Activated T-helper 2 cell treated with anti-CD3 and anti-CD28 coated beads, Interferon-gamma antibody, Interleukin-2, Interleukin-4, amounts not matched to agents 10 μg/mL and 5 μg/mL and 100 μg/mL, durations not matched to agents 14 hours and 24 hours and 36 hours (primary cell): ENCODE measurements at regions of chr19 and their contacts with region 1.

Region 1: GRCh38 chr19:57559404-57560025 is at the start of gene ZNF550:
- DNase-seq: peak; percentile 82
- H3K4me3 Mint-ChIP-seq: peak within 1 kb of the TSS; percentile 88
- H3K27ac Mint-ChIP-seq: peak within 1 kb of the TSS; percentile 76
- H3K4me1 Mint-ChIP-seq: peaks cover 18% of the 10 kb centered on the region
- H3K27me3 Mint-ChIP-seq: no peaks in the 10 kb centered on the region
- total RNA-seq, gene ZNF550: 6.9 and 7.7 TPM in 2 replicates

Region 2: DNA sequence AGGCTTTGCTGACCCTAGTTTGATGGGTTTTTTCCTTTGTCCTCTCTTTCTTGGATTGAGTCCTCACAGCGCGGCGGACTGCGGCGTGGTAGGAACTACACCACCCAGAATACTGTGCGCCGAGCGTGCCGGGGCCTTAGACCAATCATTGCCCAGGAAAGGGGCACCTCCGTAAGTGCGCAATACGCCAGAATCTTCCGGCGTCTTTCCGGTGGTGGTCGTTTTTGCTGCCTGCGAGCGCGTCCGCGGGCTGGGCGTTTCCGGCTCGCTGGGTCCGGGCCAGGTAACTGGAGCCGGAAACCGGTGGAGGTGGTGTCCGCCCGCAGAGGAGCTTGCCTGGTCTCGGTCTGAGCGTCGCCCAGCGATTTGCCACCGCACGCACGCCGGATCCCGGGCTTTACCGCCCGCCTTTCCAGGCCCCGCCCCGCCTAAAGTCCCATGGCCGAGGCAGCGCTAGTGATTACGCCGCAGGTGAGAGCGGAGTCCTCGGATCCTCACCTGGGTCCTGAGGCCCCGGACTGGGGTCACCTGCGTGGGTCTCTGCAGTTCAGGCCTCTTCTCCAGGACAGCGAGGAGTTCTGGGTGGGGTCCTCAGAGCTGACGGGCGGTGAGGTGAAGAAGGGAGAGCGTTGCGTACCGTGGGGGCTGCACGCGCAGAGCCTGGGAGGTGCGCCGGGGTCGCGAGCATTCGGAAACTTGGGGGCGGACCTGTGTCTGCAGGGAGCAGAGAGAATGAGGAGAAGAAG is 32.2 kb before region 1 on chr19 and contains the start of gene ZNF549:
- intact Hi-C with region 1: loop called (anchors 1 kb)
- DNase-seq: peak; percentile 84
- H3K4me3 Mint-ChIP-seq: peak within 1 kb of the TSS; percentile 97
- H3K27ac Mint-ChIP-seq: peak within 1 kb of the TSS; percentile 78
- H3K4me1 Mint-ChIP-seq: peaks cover 15% of the 10 kb centered on the region
- H3K27me3 Mint-ChIP-seq: no peaks in the 10 kb centered on the region
- total RNA-seq, gene ZNF549: 3.5 and 4.1 TPM in 2 replicates

Region 3: DNA sequence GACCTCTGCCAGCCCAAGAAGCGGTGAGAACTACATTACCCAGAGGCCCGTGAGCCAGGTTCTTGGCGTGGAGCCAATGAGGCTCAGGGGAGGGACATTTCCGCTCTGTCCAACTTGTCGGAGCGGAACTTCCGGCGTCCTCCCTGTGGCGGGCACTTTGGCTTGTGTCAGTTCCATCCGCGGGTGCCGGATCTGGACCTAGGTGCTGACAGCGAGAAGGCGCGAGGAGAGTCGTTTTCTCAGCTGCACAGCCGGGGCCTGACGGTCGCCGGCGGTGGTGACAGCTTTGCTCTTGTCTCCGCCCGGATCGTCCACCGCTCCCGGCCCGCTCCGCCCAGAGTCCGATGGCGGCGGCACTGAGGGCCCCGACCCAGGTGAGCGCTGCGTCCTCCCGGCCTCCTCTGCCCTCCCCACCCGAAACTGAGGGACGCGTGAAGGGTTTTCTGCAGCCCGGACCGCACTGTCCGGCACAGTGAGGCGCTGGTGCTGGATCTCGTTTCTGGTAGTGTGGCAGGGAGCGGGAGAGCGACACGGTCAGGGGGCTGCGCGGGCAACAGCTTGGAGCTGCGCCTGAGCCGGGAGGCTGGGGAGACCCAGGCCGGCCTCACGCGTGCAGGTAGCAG is 40.4 kb after region 1 on chr19 and contains the start of gene ZNF530:
- intact Hi-C with region 1: loop called (anchors 1 kb)
- DNase-seq: peak; percentile 78
- H3K4me3 Mint-ChIP-seq: peak within 1 kb of the TSS; percentile 80
- H3K27ac Mint-ChIP-seq: no peak within 1 kb of the TSS
- H3K4me1 Mint-ChIP-seq: peaks cover 10% of the 10 kb centered on the region
- H3K27me3 Mint-ChIP-seq: no peaks in the 10 kb centered on the region
- total RNA-seq, gene ZNF530: 4.1 and 5.2 TPM in 2 replicates